Endothelial cell of umbilical vein (primary cell): ENCODE measurements at regions of chr2 and their contacts with region 1.

Region 1: GRCh38 chr2:235859651-235860050 is 308.5 kb downstream of the GBX2 start:
- DNase-seq: peak; percentile 82
- H3K4me3 ChIP-seq: peak overlapping the region in 1 of 3 experiments; percentile 29
- H3K27ac ChIP-seq: peak overlapping the region; percentile 98
- H3K4me1 ChIP-seq: peaks cover 42% of the 10 kb centered on the region
- H3K27me3 ChIP-seq: no peaks in the 10 kb centered on the region
- CTCF ChIP-seq: no peak
- POLR2A ChIP-seq: no peak

Region 2: DNA sequence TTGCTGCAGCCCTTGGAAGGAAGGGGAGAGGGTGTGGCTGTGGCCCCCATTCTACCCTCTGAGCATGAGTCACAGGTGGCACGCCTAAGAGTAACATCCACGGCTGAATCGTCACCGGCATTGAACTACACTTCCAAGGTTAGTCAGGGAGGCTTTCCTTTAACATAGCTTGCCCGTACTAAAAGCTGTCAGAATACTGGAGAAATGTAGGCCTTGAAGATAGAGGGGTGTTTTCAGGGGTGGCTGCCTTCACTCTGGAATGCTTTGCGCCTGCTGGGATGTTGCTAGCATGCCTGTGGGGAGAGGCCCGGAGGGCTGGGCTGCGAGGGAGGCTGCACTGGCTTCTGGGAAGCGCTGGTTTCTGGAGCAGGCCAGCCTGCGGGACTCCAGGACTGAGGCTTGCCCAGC is 32.1 kb before region 1 on chr2:
- CTCF ChIA-PET with region 1: no interaction called
- POLR2A ChIA-PET with region 1: no interaction called
- dilution Hi-C with region 1: no loop called
- intact Hi-C with region 1: loop called (anchors 1 kb)
- DNase-seq: peak; percentile 41
- H3K4me3 ChIP-seq: no peak overlapping the region
- H3K27ac ChIP-seq: no peak overlapping the region
- H3K4me1 ChIP-seq: peaks cover 13% of the 10 kb centered on the region
- H3K27me3 ChIP-seq: no peaks in the 10 kb centered on the region
- CTCF ChIP-seq: no peak
- POLR2A ChIP-seq: no peak

Region 3: DNA sequence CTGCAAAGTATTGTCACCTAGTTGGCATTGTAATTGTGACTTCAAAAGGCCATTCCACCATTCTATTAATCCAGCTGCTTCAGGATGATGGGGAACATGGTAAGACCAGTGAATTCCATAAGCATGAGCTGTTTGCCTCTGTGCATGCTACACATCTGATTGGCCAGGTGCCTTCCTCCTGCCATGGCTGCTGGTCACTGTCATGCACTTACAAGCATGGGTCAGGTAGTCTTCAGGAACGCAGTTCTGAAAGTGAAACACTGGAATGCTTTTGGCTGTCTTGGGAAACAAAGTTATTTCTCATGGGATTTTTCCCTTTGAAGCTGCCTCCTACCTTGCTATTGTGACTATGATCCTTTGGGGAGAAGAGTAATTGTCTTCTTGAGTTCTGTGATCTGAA is 41.0 kb after region 1 on chr2:
- CTCF ChIA-PET with region 1: no interaction called
- POLR2A ChIA-PET with region 1: no interaction called
- dilution Hi-C with region 1: no loop called
- intact Hi-C with region 1: loop called (anchors 2 kb)
- DNase-seq: peak; percentile 37
- H3K4me3 ChIP-seq: no peak overlapping the region
- H3K27ac ChIP-seq: peak overlapping the region; percentile 43
- H3K4me1 ChIP-seq: peaks cover 23% of the 10 kb centered on the region
- H3K27me3 ChIP-seq: no peaks in the 10 kb centered on the region
- CTCF ChIP-seq: no peak
- POLR2A ChIP-seq: no peak

Region 4: GRCh38 chr2:235940330-235940729 is 80.7 kb after region 1 on chr2:
- CTCF ChIA-PET with region 1: interaction called, 6 read pairs
- POLR2A ChIA-PET with region 1: no interaction called
- dilution Hi-C with region 1: no loop called
- intact Hi-C with region 1: loop called (anchors 5 kb)
- DNase-seq: no peak
- H3K4me3 ChIP-seq: no peak overlapping the region
- H3K27ac ChIP-seq: no peak overlapping the region
- H3K4me1 ChIP-seq: peaks cover 3% of the 10 kb centered on the region
- H3K27me3 ChIP-seq: no peaks in the 10 kb centered on the region
- CTCF ChIP-seq: no peak
- POLR2A ChIP-seq: no peak

Region 5: GRCh38 chr2:236001166-236001828 is 141.6 kb after region 1 on chr2:
- CTCF ChIA-PET with region 1: no interaction called
- POLR2A ChIA-PET with region 1: no interaction called
- dilution Hi-C with region 1: no loop called
- intact Hi-C with region 1: loop called (anchors 2 kb)
- DNase-seq: peak; percentile 85
- H3K4me3 ChIP-seq: peak overlapping the region in 1 of 3 experiments; percentile 48
- H3K27ac ChIP-seq: peak overlapping the region; percentile 90
- H3K4me1 ChIP-seq: peaks cover 11% of the 10 kb centered on the region
- H3K27me3 ChIP-seq: no peaks in the 10 kb centered on the region
- CTCF ChIP-seq: no peak
- POLR2A ChIP-seq: peak; percentile 28

Region 6: GRCh38 chr2:236168110-236169067 is 308.7 kb after region 1 on chr2 and contains the start of gene GBX2:
- CTCF ChIA-PET with region 1: no interaction called
- POLR2A ChIA-PET with region 1: no interaction called
- dilution Hi-C with region 1: no loop called
- intact Hi-C with region 1: loop called (anchors 2 kb)
- DNase-seq: peak; percentile 92
- H3K4me3 ChIP-seq: peak within 1 kb of the TSS; percentile 59 to 73 (median 68)
- H3K27ac ChIP-seq: peak within 1 kb of the TSS; percentile 11
- H3K4me1 ChIP-seq: peaks cover 25% of the 10 kb centered on the region
- H3K27me3 ChIP-seq: peaks cover 3 to 48% of the 10 kb centered on the region in 2 experiments
- CTCF ChIP-seq: no peak
- POLR2A ChIP-seq: peak; percentile 77
- total RNA-seq, gene GBX2: 3.6 TPM in 2 replicates

Region 7: DNA sequence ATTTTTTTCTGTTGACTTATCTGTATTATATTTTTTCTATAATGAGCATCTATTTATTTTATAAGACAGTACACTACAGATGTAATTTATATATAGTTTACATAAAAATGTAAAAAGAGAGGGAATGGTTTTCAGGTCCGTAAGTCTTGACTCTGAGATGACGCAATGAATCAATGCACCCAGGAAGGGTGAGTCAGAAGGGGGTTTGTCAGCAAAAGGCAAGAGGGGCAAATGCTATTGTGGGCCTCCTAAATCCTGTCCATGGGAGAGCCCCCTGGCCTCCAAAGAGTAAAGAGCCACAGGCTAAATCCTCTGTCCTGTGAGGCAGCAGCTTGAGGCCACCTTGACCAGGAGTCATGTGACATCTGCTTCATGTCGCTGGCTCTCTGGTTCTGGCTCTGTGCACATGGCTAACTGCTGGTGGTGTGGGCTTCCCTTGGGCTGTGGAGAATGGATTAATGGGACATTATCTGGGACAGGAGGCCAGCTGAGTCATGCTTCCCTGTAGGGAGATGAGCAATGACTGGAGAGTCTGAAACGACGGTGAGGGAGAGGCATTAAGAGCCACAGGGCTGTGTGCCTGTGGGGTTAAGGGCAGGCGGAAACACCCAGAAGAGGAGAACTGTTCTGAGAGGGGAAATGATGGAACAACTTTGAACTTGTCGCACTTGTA is 427.4 kb after region 1 on chr2:
- CTCF ChIA-PET with region 1: no interaction called
- POLR2A ChIA-PET with region 1: no interaction called
- dilution Hi-C with region 1: no loop called
- intact Hi-C with region 1: no loop called
- DNase-seq: no peak
- H3K4me3 ChIP-seq: no peak overlapping the region
- H3K27ac ChIP-seq: no peak overlapping the region
- H3K4me1 ChIP-seq: no peaks in the 10 kb centered on the region
- H3K27me3 ChIP-seq: no peaks in the 10 kb centered on the region
- CTCF ChIP-seq: no peak
- POLR2A ChIP-seq: no peak